Mammary epithelial cell (primary cell): ENCODE measurements at regions of chr10 and their contacts with region 1.

Region 1: GRCh38 chr10:95601116-95601719 is 40.0 kb upstream of the SORBS1 start:
- DNase-seq: peak; percentile 76
- H3K4me3 ChIP-seq: no peak overlapping the region
- H3K27ac ChIP-seq: no peak overlapping the region
- H3K4me1 ChIP-seq: no peaks in the 10 kb centered on the region
- H3K27me3 ChIP-seq: no peaks in the 10 kb centered on the region
- CTCF ChIP-seq: peak; percentile 92 to 98

Region 2: DNA sequence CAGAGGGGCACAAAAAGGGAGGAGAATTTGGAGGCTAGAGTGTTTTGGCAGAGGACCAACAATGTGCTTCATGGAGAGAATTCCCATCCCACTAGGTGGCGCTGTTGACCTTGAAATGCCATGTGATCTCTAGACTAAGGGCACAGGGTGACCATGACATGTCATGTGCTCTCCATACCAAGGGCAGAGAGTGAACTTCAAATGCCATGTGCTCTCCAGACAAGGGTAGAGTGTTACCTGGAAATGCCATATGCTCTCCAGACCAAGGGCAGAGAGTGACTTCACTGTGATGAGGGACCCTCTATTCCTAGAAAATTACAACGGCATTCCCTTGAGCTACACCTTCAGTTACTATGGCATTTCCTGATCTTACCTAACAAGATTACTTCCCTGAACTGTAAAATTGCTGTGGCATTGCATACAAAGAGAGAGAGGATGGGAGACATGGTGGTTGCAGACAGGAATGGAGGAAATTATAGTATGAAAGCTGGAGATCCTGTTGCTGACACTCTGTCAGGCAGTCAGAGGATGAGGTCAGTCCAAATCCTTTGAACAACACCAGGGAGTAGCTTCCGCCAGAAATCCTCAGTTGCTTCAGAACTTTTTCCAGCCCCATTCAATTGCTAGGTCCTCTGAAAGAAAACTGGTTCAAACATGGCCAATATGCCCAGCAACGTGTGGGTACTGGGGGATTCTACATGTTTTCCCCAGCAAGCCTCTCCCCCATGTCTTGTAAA is 468.0 kb before region 1 on chr10:
- CTCF ChIA-PET with region 1: no interaction called
- dilution Hi-C with region 1: loop called (anchors 10 kb)
- in situ Hi-C with region 1: no loop called
- intact Hi-C with region 1: loop called (anchors 1 kb)
- DNase-seq: peak; percentile 64
- H3K4me3 ChIP-seq: no peak overlapping the region
- H3K27ac ChIP-seq: no peak overlapping the region
- H3K4me1 ChIP-seq: no peaks in the 10 kb centered on the region
- H3K27me3 ChIP-seq: no peaks in the 10 kb centered on the region
- CTCF ChIP-seq: peak; percentile 84

Region 3: GRCh38 chr10:95201736-95202135 is 399.5 kb before region 1 on chr10:
- CTCF ChIA-PET with region 1: no interaction called
- dilution Hi-C with region 1: no loop called
- in situ Hi-C with region 1: loop called in 1 of 2 experiments (anchors 25 kb)
- intact Hi-C with region 1: loop called (anchors 1 kb)
- DNase-seq: peak; percentile 89
- H3K4me3 ChIP-seq: no peak overlapping the region
- H3K27ac ChIP-seq: no peak overlapping the region
- H3K4me1 ChIP-seq: no peaks in the 10 kb centered on the region
- H3K27me3 ChIP-seq: no peaks in the 10 kb centered on the region
- CTCF ChIP-seq: peak; percentile 78 to 81

Region 4: GRCh38 chr10:95414844-95415485 is 186.3 kb before region 1 on chr10:
- CTCF ChIA-PET with region 1: no interaction called
- dilution Hi-C with region 1: loop called (anchors 5 kb)
- in situ Hi-C with region 1: loop called in 1 of 2 experiments (anchors 10 kb)
- intact Hi-C with region 1: no loop called
- DNase-seq: peak; percentile 41
- H3K4me3 ChIP-seq: no peak overlapping the region
- H3K27ac ChIP-seq: no peak overlapping the region
- H3K4me1 ChIP-seq: peaks cover 8% of the 10 kb centered on the region
- H3K27me3 ChIP-seq: no peaks in the 10 kb centered on the region
- CTCF ChIP-seq: no peak

Region 5: GRCh38 chr10:95430231-95430951 is 170.8 kb before region 1 on chr10:
- CTCF ChIA-PET with region 1: no interaction called
- dilution Hi-C with region 1: no loop called
- in situ Hi-C with region 1: loop called (anchors 5 to 10 kb)
- intact Hi-C with region 1: loop called (anchors 1 kb)
- DNase-seq: peak; percentile 62
- H3K4me3 ChIP-seq: no peak overlapping the region
- H3K27ac ChIP-seq: no peak overlapping the region
- H3K4me1 ChIP-seq: peaks cover 16% of the 10 kb centered on the region
- H3K27me3 ChIP-seq: no peaks in the 10 kb centered on the region
- CTCF ChIP-seq: peak; percentile 88 to 94

Region 6: DNA sequence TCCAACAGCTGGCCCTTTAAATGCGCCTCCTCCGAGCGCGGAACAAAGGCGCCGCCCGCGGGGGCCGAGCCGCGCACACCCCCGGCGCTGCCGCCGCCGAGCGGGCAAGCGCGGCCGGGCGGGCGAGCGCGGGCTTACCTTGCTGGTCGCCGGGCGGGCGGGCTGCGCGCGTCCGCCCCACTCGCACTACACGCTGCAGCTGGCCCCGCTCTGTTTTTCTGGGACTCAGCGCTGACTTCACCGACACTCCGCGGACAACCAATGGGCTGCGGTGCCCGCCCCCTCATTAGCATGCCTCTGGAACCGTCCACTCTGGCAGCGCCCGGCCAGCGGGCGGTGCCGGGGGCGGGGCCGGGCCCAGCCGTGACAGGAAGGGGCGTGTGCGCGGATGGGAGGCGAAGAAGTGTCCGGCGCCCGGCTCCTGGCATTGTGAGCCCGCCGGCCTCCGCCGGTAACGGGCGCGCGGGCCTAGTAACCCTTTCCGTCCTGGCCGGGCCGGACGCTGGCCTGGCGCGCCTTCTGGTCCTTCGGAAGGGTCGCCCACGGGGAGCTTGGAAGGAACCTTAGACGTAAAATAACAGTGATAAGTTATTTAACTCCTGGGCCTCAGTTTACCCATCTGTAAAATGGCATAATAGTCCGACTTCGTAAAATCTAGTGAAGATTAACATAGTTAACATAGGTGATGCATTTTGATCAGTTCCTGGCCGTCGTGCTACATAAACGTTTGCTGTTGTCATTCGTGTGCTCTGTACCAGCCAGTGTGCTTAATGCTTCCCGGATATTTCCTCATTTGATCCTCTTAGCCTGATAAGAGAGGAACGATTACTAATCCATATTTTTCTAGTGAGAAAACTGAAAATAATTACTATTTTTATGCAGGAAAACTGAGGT is 39.8 kb before region 1 on chr10 and contains the start of gene SORBS1:
- CTCF ChIA-PET with region 1: interaction called, 14 read pairs
- dilution Hi-C with region 1: no loop called
- in situ Hi-C with region 1: no loop called
- intact Hi-C with region 1: loop called (anchors 2 kb)
- DNase-seq: peak; percentile 98
- H3K4me3 ChIP-seq: peak within 1 kb of the TSS; percentile 84 to 87 (median 84)
- H3K27ac ChIP-seq: peak within 1 kb of the TSS; percentile 25
- H3K4me1 ChIP-seq: peaks cover 11% of the 10 kb centered on the region
- H3K27me3 ChIP-seq: peaks cover 5% of the 10 kb centered on the region
- CTCF ChIP-seq: no peak
- total RNA-seq, gene SORBS1: 1.6 to 9.8 TPM